CD4-positive, alpha-beta T cell (primary cell): ENCODE measurements at regions of chr1 and their contacts with region 1.

Region 1: GRCh38 chr1:171295821-171296220 is 18.2 kb upstream of the FMO4 start:
- DNase-seq: no peak
- ATAC-seq: no peak
- H3K4me3 ChIP-seq: no peak overlapping the region
- H3K4me3 Mint-ChIP-seq: no peak overlapping the region
- H3K27ac ChIP-seq: no peak overlapping the region
- H3K27ac Mint-ChIP-seq: no peak overlapping the region
- H3K4me1 ChIP-seq: no peaks in the 10 kb centered on the region
- H3K4me1 Mint-ChIP-seq: no peaks in the 10 kb centered on the region
- H3K27me3 ChIP-seq: peaks cover 8 to 11% of the 10 kb centered on the region in 2 experiments
- H3K27me3 Mint-ChIP-seq: peaks cover 45% of the 10 kb centered on the region
- CTCF ChIP-seq: no peak

Region 2: DNA sequence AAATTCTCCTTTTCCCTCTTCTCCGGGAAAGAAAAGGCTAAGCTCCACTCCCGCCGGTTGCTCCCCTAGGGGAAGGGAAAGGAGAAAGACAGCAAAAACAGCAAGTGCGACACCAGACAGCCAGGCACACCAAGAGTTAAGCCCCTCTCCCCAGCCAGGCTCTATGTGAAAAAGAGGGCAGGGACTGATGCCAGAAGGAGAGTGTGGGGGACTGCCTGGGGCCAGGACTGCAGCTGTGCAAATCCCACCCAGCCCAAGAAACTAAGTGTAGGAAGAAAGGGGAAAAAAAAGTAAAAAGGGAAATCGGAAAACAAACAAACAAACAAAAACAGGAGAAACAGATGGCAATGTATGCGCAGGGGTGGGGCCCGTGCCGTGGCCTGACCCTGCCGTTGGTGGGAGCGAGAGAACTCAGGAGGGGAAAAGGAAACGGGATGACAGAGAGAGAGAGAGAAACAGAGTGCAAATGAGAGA is 75.2 kb before region 1 on chr1:
- CTCF ChIA-PET with region 1: no interaction called
- POLR2A ChIA-PET with region 1: no interaction called
- intact Hi-C with region 1: loop called in 1 of 2 experiments (anchors 5 kb)
- DNase-seq: no peak
- ATAC-seq: no peak
- H3K4me3 ChIP-seq: no peak overlapping the region
- H3K4me3 Mint-ChIP-seq: no peak overlapping the region
- H3K27ac ChIP-seq: no peak overlapping the region
- H3K27ac Mint-ChIP-seq: no peak overlapping the region
- H3K4me1 ChIP-seq: no peaks in the 10 kb centered on the region
- H3K4me1 Mint-ChIP-seq: no peaks in the 10 kb centered on the region
- H3K27me3 ChIP-seq: peaks cover 8 to 9% of the 10 kb centered on the region in 2 experiments
- H3K27me3 Mint-ChIP-seq: peaks cover 18% of the 10 kb centered on the region
- CTCF ChIP-seq: no peak

Region 3: GRCh38 chr1:171366099-171366498 is 70.3 kb after region 1 on chr1:
- CTCF ChIA-PET with region 1: no interaction called
- POLR2A ChIA-PET with region 1: no interaction called
- intact Hi-C with region 1: no loop called
- DNase-seq: no peak
- ATAC-seq: no peak
- H3K4me3 ChIP-seq: no peak overlapping the region
- H3K4me3 Mint-ChIP-seq: no peak overlapping the region
- H3K27ac ChIP-seq: no peak overlapping the region
- H3K27ac Mint-ChIP-seq: no peak overlapping the region
- H3K4me1 ChIP-seq: no peaks in the 10 kb centered on the region
- H3K4me1 Mint-ChIP-seq: no peaks in the 10 kb centered on the region
- H3K27me3 ChIP-seq: no peaks in the 10 kb centered on the region
- H3K27me3 Mint-ChIP-seq: peaks cover 9% of the 10 kb centered on the region
- CTCF ChIP-seq: no peak

Region 4: DNA sequence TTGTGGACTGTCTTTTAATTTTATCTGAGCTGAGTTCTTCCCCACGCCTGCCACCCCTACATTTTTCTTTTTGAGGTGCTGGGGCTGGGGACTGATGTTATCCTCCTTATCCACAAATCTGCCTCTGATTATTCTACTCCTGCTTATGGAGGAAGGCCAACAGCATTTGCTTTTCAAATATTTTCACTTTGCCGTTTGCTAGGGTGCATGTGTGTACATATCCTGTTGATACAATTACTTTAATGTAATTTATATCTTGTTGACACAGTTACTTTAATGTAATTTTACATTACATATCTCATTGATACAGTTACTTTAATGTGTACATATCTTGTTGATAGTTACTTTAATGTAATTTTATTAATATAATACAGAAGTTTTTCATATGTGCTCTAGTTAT is 225.7 kb after region 1 on chr1:
- CTCF ChIA-PET with region 1: no interaction called
- POLR2A ChIA-PET with region 1: no interaction called
- intact Hi-C with region 1: no loop called
- DNase-seq: no peak
- ATAC-seq: no peak
- H3K4me3 ChIP-seq: no peak overlapping the region
- H3K4me3 Mint-ChIP-seq: no peak overlapping the region
- H3K27ac ChIP-seq: no peak overlapping the region
- H3K27ac Mint-ChIP-seq: no peak overlapping the region
- H3K4me1 ChIP-seq: no peaks in the 10 kb centered on the region
- H3K4me1 Mint-ChIP-seq: no peaks in the 10 kb centered on the region
- H3K27me3 ChIP-seq: no peaks in the 10 kb centered on the region
- H3K27me3 Mint-ChIP-seq: no peaks in the 10 kb centered on the region
- CTCF ChIP-seq: no peak